Activated CD4-positive, alpha-beta T cell treated with anti-CD3 and anti-CD28 coated beads for 36 hours (primary cell): ENCODE measurements at regions of chr1 and their contacts with region 1.

Region 1: DNA sequence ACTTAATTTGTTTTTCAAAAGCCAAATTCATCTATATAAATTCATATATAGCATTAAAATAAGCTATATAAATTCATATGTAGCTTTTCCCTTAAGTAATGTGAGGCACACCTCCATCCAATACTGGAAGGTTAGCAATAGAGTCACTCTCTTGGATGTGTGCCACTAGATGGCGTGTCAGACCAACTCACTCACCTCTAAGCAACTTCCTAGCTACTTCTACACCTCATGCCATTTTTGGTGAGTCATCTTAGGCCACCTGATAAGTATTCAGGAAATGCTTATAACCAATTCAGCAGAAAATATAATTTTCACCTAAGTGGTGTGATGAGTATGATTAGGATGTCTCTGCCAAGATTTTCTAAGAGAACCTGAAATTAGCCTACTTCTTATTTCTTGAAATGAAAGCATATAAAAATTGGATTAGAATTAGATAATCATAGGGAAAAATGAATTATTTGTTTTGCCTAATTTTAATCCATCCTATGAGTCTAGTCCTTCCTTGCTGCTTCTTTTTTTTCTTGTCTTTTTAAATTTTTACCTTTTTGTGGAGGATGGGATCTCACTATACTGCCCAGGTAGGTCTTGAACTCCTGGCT is 34.4 kb upstream of the TADA1 start:
- DNase-seq: peak; percentile 87
- ATAC-seq: peak; percentile 96
- H3K4me3 Mint-ChIP-seq: no peak overlapping the region
- H3K27ac Mint-ChIP-seq: no peak overlapping the region
- H3K4me1 Mint-ChIP-seq: peaks cover 13% of the 10 kb centered on the region
- H3K27me3 Mint-ChIP-seq: no peaks in the 10 kb centered on the region

Region 2: DNA sequence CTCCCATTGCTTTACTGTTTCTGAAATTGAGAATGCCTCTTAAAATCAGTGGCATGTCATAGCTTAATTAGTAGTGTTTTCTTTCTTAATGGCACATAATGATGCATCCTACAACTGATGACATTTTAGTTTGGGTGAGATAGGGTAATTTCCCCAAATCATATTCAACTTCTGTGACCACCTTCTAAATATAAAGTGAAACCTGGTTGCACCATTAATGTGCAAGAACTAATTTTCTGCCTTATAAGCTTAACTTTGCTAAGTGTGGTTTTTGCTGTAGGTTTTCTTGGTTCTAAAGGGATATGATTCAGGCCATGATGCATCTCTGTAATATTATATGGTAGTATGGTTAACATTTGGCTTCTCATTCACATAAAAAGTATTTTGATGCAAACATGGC is 62.3 kb before region 1 on chr1:
- CTCF ChIA-PET with region 1: no interaction called
- POLR2A ChIA-PET with region 1: no interaction called
- intact Hi-C with region 1: no loop called
- DNase-seq: no peak
- ATAC-seq: peak; percentile 81
- H3K4me3 Mint-ChIP-seq: no peak overlapping the region
- H3K27ac Mint-ChIP-seq: peak overlapping the region; percentile 69
- H3K4me1 Mint-ChIP-seq: peaks cover 75% of the 10 kb centered on the region
- H3K27me3 Mint-ChIP-seq: no peaks in the 10 kb centered on the region

Region 3: GRCh38 chr1:166875734-166876539 is 34.6 kb before region 1 on chr1 and contains the start of gene TADA1:
- CTCF ChIA-PET with region 1: interaction called, 10 read pairs
- POLR2A ChIA-PET with region 1: interaction called, 4 read pairs
- intact Hi-C with region 1: loop called in 1 of 2 experiments (anchors 1 kb)
- DNase-seq: peak; percentile 100
- ATAC-seq: peak; percentile 91
- H3K4me3 Mint-ChIP-seq: peak within 1 kb of the TSS; percentile 92
- H3K27ac Mint-ChIP-seq: peak within 1 kb of the TSS; percentile 97
- H3K4me1 Mint-ChIP-seq: peaks cover 45% of the 10 kb centered on the region
- H3K27me3 Mint-ChIP-seq: no peaks in the 10 kb centered on the region
- total RNA-seq, gene TADA1: 16.0 to 19.5 TPM

Region 4: DNA sequence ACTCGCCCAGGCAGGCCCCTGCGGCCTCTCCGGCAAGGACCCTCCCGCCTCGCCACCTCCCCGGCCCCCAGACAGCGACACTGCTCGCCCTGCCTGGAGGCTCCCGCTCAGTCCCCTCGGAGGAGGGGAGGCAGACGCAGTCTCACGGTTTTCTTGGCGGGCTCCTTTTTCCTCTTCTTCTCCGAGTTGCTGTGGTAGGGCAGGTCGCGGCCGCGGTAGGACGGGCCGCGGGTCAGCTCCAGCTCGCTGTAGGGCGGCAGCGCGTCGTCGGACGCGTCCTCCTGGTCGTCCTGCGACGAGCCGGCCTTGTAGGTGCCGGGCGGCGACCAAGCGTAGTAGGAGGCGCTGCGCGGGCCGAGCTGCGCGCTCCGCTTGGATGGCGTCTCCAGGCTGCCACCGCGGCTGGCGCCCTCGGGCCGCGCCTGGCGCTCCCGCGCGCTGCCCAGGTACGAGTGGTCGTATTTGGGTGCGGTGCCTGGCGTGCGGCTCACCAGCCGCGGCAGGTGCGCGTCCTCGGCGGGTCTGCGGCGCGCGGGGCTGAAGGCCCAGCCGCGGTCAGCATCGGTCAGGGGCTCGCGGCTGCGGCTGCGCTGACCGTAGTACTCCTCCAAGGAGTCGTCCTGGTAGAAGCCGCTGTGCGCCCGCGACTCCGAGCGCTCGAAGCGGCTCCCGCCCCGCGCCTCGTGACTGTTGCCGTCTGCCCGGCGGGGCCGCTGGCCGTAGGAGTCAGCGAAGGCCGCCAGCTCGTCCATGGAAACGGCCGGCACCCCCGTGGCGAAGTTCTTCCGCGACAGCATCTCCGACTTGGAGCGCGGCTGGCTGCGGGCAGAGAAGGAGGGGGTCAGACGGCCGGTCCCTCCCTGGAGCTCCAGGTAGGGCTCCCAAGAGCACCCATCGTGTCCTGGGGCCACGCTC is 10.3 kb after region 1 on chr1:
- CTCF ChIA-PET with region 1: interaction called, 17 read pairs
- POLR2A ChIA-PET with region 1: no interaction called
- intact Hi-C with region 1: no loop called
- DNase-seq: peak; percentile 32
- ATAC-seq: peak; percentile 57
- H3K4me3 Mint-ChIP-seq: no peak overlapping the region
- H3K27ac Mint-ChIP-seq: no peak overlapping the region
- H3K4me1 Mint-ChIP-seq: no peaks in the 10 kb centered on the region
- H3K27me3 Mint-ChIP-seq: peaks cover 23% of the 10 kb centered on the region

Region 5: DNA sequence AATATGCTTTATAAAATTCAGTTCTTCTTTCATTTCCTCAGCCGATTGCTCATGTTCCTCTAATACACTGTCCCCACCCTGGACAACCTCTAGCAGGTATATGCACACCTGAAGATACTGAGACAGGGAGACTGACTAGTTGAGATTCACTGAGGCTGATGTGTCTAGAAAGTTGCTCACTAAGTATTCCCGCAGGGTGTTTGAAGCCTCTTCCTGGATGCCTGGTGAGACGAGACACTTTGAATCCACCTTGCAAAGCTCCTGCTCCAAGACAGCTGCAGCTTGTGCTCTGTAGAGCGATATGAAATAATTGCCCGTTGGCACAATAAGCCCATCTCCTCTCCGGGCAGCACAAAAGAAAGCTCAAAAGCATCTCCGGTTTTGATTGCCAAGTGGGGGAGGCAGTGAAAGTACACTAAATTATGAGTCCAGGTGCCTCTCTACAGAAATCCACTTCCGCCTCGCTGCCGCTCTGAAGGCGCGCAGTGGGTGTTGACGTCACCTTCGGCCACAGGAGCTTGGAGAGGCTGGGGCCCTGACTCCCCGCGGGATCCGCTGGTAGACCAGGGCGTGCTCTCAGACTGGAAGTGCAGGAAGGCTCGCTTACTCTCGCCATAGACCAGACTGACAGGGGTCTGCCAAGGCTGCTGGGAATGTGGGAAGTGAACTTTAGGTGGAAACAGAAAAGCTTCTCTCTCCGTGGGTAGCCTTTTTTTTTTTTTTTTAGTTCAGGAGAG is 133.4 kb after region 1 on chr1:
- CTCF ChIA-PET with region 1: interaction called, 19 read pairs
- POLR2A ChIA-PET with region 1: no interaction called
- intact Hi-C with region 1: loop called in 1 of 2 experiments (anchors 5 kb)
- DNase-seq: peak; percentile 89
- ATAC-seq: peak; percentile 99
- H3K4me3 Mint-ChIP-seq: peak overlapping the region; percentile 72
- H3K27ac Mint-ChIP-seq: peak overlapping the region; percentile 83
- H3K4me1 Mint-ChIP-seq: peaks cover 18% of the 10 kb centered on the region
- H3K27me3 Mint-ChIP-seq: peaks cover 7% of the 10 kb centered on the region

Region 6: DNA sequence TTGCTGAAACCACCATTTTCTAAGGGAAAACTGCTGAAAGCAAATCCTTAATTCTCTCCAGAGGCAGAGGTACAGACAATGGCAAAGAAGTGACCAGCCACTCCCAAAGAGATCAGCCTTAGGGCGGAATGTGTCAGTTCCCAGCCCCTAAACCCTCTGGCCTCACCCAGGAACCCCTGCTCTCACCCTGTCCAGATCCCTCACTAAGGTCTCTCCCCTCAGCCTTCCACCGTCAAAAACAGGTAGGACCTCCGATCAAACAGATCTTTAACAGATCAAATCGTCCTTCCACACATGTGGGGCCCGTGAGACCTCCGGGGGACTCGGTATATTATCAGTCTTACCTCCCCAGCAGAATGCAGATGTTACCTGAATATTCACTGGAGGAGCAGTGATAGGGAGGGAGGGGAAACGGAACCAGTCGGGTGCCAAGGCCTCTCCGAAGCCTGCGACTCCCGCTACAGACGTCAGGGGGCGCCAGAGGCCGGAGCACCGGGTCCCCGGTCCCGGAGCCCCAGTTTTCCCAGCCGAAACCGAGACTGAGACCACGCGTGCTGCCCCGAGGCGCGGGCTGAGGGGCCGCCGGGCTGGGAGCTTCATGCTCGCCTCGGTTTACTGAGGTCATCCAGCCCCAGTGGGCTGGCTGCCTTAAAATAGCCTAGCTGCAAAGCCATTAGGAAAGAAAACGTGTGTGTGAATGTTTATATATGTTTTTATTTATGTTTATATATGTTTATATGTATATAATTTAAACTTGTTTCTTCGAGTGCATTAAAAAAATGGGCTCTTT is 156.0 kb after region 1 on chr1:
- CTCF ChIA-PET with region 1: interaction called, 541 read pairs
- POLR2A ChIA-PET with region 1: no interaction called
- intact Hi-C with region 1: no loop called
- DNase-seq: peak; percentile 87
- ATAC-seq: peak; percentile 95
- H3K4me3 Mint-ChIP-seq: no peak overlapping the region
- H3K27ac Mint-ChIP-seq: no peak overlapping the region
- H3K4me1 Mint-ChIP-seq: no peaks in the 10 kb centered on the region
- H3K27me3 Mint-ChIP-seq: no peaks in the 10 kb centered on the region

Region 7: GRCh38 chr1:167328816-167329483 is 418.5 kb after region 1 on chr1:
- CTCF ChIA-PET with region 1: no interaction called
- POLR2A ChIA-PET with region 1: no interaction called
- intact Hi-C with region 1: no loop called
- DNase-seq: peak; percentile 17
- ATAC-seq: no peak
- H3K4me3 Mint-ChIP-seq: no peak overlapping the region
- H3K27ac Mint-ChIP-seq: no peak overlapping the region
- H3K4me1 Mint-ChIP-seq: peaks cover 37% of the 10 kb centered on the region
- H3K27me3 Mint-ChIP-seq: no peaks in the 10 kb centered on the region